Ascending aorta (tissue), 2 donors: ENCODE measurements at regions of chr1 and their contacts with region 1.

Region 1: DNA sequence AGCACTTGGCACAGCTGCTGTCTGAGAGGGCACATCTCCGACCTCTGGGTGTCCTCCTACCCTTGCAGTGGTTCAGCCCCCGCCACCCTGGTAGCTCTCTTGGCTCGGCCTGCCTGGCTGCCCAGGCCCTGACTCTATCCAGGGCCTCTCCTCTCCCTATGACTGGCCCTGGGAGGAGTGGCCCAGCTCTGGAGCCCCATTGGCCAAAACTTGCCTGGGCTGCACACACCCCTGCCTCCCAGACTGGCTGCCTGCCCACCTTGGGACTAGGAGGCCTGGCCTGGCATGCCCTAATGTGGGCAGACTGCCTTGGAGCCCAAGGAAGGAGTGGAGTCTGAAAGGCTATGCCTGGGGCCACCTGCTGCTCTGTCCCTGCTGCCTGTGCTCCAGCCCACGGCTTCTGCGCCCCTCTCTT is 33.6 kb downstream of the ACOT11 start:
- DNase-seq: peak; percentile 90 to 98
- H3K4me3 ChIP-seq: no peak overlapping the region
- H3K27ac ChIP-seq: peak overlapping the region; percentile 93 to 96
- H3K4me1 ChIP-seq: peaks cover 0 to 37% of the 10 kb centered on the region in 2 donors
- H3K27me3 ChIP-seq: no peaks in the 10 kb centered on the region
- CTCF ChIP-seq: peak in 2 of 3 experiments; percentile 6 to 35

Region 2: DNA sequence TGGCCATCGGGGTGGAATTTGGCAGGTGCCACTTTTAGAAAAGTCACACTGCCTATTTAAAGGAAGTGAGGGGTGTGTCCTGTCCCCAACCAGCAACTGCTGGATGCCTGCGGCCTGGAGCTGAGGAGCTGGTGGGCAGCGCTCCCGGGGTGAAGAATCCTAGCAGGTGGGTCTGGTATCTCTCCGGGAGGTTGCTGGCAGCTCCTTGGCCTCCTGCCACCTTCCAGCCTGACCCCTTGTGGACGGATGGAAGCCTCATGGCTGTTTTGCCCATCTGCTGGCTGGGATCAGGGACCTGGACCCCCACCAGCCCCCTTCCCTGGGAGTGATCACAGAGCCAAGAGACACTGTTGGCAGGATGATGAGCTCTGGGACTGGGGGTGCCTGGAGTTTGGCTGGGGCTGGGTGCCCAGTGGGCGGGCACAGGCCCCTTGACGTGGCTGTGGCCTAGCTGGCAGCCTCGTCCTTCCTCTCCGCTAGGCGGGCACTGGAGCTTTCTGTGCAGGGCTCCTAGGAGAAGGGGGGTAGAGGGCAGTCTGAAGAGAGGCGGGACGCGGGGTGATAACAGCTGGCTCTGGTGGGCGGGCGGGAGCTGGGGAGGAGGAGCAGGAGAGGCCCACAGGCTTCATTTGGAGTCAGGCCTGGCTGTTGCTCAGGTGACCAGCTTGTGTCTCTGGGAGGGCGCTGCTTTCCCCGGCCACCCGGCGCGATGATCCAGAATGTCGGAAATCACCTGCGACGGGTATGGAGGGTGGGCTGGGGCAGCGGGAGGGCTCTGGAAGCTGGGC is 33.8 kb before region 1 on chr1 and contains the start of gene ACOT11:
- intact Hi-C with region 1: loop called (anchors 1 kb)
- DNase-seq: peak; percentile 69 to 94
- H3K4me3 ChIP-seq: peak within 1 kb of the TSS; percentile 44 to 59
- H3K27ac ChIP-seq: peak within 1 kb of the TSS; percentile 83 to 92
- H3K4me1 ChIP-seq: peaks cover 18 to 20% of the 10 kb centered on the region in 2 donors
- H3K27me3 ChIP-seq: no peaks in the 10 kb centered on the region
- CTCF ChIP-seq: peak; percentile 58 to 73 (median 70)
- total RNA-seq, gene ACOT11: 30.4 TPM